Left lung (tissue), 14 donors: ENCODE measurements at regions of chr17 and their contacts with region 1.

Region 1: DNA sequence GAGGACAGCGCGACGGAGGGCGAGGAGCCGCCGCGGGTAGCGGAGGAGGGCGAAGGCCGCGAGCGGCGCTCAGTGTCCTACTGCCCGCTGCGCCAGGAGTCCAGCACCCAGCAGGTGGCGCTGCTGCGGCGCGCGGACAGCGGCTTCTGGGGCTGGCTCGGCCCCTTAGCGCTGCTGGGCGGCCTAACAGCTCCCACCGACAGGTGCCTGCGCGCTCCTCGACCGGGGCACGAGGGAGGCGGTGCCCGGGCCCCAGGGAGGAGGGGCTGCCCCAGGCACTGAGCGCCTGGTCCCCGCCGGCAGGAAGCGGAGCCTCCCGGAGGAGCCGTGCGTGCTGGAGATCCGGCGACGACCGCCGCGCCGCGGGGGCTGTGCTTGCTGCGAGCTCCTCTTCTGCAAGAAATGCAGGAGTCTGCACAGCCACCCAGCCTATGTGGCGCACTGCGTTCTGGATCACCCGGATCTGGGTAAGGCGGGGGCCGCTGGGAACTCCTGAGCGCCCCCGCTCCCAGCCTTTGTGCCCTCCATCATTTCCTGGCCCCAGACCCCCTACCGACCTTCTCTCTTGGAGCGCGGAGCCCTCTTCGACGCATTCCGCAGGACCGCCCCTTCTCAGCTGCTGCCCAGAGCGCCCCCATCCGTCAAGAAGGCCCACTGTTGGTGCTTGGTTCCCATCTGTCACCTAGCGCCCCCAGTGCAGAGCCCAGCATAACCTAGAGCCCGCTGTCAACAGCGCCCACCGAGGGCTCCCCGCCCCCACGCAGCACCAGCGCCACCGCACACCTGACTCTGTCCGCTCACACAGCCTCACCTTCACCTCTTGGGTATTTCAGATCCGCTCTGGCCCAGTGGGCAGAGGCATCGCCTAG is 3.7 kb downstream of the C17orf50 start:
- DNase-seq: peak; percentile 81 to 98 (median 89)
- ATAC-seq: peak; percentile 96
- H3K4me3 ChIP-seq: peak overlapping the region; percentile 44 to 45
- H3K27ac ChIP-seq: no peak overlapping the region
- H3K4me1 ChIP-seq: peaks cover 5 to 17% of the 10 kb centered on the region in 2 donors
- H3K27me3 ChIP-seq: peaks cover 0 to 14% of the 10 kb centered on the region in 2 donors
- CTCF ChIP-seq: peak; percentile 88 to 97

Region 2: DNA sequence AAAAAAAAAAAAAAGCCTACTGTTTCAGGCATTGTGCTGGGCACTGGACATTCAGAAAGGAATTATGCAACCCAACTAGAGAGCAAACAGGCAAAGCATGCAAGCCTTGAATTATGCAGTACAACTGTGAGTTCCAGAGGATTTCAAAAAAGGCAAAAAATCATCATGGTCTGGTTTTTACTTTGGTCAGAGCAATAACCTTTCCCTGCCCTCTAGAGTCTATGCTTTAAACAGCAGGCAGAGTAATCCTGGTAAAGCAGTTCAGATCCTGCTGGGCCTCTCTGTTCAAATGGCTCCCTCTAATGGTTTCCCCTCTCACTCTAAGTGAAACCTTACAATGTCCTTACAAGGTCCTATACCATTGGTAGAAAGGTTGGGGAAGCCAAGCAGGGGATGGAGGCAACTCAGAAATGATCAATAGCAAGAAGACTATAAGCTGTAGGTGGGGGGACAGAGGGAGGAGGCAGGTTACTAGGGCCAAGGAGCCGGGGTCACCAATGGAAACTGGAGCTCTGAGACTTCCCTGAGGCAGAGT is 40.4 kb after region 1 on chr17:
- intact Hi-C with region 1: loop called in 1 of 2 experiments (anchors 2 kb)
- DNase-seq: peak in 2 of 4 donors; percentile 65 to 87
- ATAC-seq: peak; percentile 67
- H3K4me3 ChIP-seq: no peak overlapping the region
- H3K27ac ChIP-seq: no peak overlapping the region
- H3K4me1 ChIP-seq: peaks cover 12 to 45% of the 10 kb centered on the region in 2 donors
- H3K27me3 ChIP-seq: no peaks in the 10 kb centered on the region
- CTCF ChIP-seq: peak; percentile 68 to 92